ENCODE measurements at regions of chr11 and their contacts with region 1.

Region 1: DNA sequence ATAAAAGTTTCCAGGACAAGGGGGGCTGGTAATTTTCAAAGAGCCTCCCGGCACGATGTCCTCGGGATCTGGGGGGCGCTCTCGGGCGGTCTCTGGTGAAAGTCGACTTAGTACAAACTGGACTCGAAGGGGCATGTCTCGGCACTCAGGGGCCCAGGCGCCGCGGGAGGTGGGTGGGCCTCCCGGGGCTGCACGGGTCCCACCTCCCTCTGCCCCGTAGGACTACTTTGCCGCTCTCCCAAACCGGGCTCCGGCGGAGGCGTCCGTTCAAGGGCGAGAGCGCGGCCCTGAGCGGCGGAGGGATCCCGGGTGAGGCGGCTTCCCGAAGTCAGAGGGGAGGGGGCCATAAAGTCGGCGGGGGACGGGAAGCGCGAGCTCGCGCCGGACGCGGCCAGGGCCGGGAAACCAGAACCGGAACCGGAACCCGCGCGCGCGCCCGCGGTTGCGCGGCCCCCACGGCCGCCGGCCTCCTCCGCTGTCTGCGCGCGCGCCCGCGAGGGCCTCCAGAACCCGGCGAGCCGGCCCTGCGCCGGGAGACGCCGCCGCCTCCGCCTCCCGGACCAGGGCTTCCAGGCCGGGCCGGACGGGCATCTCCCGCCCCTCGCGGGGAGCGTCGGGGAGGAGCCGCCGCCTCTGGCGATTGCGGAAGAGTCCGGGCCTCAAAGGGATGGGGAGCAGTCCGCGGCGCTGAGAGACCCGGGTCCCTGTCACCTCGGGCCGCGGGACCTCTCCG is at the start of gene ARHGEF12:
- DNase-seq: peak; percentile 95
- H3K4me3 Mint-ChIP-seq: peak within 1 kb of the TSS; percentile 94
- H3K27ac Mint-ChIP-seq: peak within 1 kb of the TSS; percentile 88
- H3K4me1 Mint-ChIP-seq: peaks cover 52% of the 10 kb centered on the region
- H3K27me3 Mint-ChIP-seq: no peaks in the 10 kb centered on the region
- CTCF ChIP-seq: no peak
- total RNA-seq, gene ARHGEF12: 61.2 and 62.8 TPM in 2 replicates

Region 2: GRCh38 chr11:120324932-120325810 is 10.9 kb before region 1 on chr11 and contains the start of gene TLCD5:
- CTCF ChIA-PET with region 1: interaction called, 3 read pairs
- POLR2A ChIA-PET with region 1: interaction called, 14 read pairs
- intact Hi-C with region 1: no loop called
- DNase-seq: peak; percentile 55
- H3K4me3 Mint-ChIP-seq: peak within 1 kb of the TSS; percentile 73
- H3K27ac Mint-ChIP-seq: peak within 1 kb of the TSS; percentile 60
- H3K4me1 Mint-ChIP-seq: peaks cover 13% of the 10 kb centered on the region
- H3K27me3 Mint-ChIP-seq: no peaks in the 10 kb centered on the region
- CTCF ChIP-seq: no peak
- total RNA-seq, gene TLCD5: 9.6 and 13.0 TPM in 2 replicates

Region 3: DNA sequence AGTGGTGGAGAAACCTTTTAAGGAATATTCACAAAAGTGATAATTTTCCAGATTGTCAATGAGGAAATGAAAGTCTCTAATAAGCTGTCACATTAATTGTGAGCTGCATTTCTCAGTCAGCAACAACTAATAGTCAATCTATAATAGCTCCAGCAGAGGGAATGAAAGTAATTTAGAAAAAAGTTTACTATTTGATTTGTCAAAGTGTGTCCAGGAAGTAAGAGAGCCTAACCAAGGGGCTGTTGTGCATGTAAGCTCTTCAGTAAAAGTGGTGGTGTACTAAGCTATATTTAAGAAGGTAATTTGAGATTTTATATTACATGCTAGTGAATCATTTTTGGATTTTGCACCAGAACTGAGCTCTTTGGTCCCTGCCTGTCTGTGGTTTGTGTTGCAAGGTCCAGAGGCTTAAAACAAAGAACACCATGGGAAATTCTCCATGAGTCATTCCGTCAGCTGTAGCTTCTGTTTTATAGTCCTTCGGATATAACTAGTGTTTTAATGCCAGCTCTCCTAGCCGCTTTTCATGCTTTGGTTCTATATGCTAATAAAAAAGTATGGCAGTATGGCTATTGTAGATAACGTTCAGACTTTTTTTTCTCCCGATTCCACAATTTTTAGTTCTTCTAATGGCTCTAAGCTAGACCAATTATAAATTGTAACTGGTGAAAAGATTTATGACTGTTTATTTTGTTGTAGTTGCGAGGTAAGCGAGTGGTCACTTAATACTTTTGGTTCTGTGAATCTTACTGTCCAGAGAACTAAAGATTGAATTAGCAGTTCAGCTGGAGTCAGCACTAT is 64.7 kb after region 1 on chr11:
- CTCF ChIA-PET with region 1: interaction called, 23 read pairs
- POLR2A ChIA-PET with region 1: interaction called, 128 read pairs
- intact Hi-C with region 1: loop called (anchors 1 kb)
- DNase-seq: peak; percentile 98
- H3K4me3 Mint-ChIP-seq: peak overlapping the region; percentile 72
- H3K27ac Mint-ChIP-seq: peak overlapping the region; percentile 80
- H3K4me1 Mint-ChIP-seq: peaks cover 33% of the 10 kb centered on the region
- H3K27me3 Mint-ChIP-seq: no peaks in the 10 kb centered on the region
- CTCF ChIP-seq: no peak

Region 4: GRCh38 chr11:120424185-120424969 is 88.3 kb after region 1 on chr11:
- CTCF ChIA-PET with region 1: interaction called, 9 read pairs
- POLR2A ChIA-PET with region 1: interaction called, 93 read pairs
- intact Hi-C with region 1: no loop called
- DNase-seq: peak; percentile 35
- H3K4me3 Mint-ChIP-seq: peak overlapping the region; percentile 38
- H3K27ac Mint-ChIP-seq: no peak overlapping the region
- H3K4me1 Mint-ChIP-seq: peaks cover 8% of the 10 kb centered on the region
- H3K27me3 Mint-ChIP-seq: no peaks in the 10 kb centered on the region
- CTCF ChIP-seq: no peak

Region 5: DNA sequence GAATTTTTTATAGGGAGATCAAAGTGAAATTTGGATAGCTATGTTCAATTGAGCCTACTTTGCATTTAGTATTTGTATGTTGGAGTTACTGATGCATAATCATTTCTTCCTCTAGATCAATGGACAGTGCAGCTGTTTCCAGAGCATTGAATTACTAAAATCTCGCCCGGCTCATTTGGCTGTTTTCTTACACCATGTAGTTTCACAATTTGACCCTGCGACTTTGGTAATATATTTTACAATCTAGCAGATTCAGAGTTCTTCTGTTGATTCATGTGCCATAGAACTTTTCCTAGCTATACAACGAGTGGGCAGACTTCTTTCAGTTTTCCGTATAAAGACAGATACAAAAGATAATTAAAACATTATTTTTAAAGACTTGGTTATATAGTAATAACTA is 105.5 kb after region 1 on chr11:
- CTCF ChIA-PET with region 1: interaction called, 10 read pairs
- POLR2A ChIA-PET with region 1: interaction called, 14 read pairs
- intact Hi-C with region 1: no loop called
- DNase-seq: no peak
- H3K4me3 Mint-ChIP-seq: no peak overlapping the region
- H3K27ac Mint-ChIP-seq: no peak overlapping the region
- H3K4me1 Mint-ChIP-seq: no peaks in the 10 kb centered on the region
- H3K27me3 Mint-ChIP-seq: no peaks in the 10 kb centered on the region
- CTCF ChIP-seq: no peak

Region 6: GRCh38 chr11:120511116-120511819 is 175.2 kb after region 1 on chr11 and contains the start of gene GRIK4:
- CTCF ChIA-PET with region 1: interaction called, 11 read pairs
- POLR2A ChIA-PET with region 1: no interaction called
- intact Hi-C with region 1: no loop called
- DNase-seq: peak; percentile 79
- H3K4me3 Mint-ChIP-seq: peak within 1 kb of the TSS; percentile 29
- H3K27ac Mint-ChIP-seq: no peak within 1 kb of the TSS
- H3K4me1 Mint-ChIP-seq: peaks cover 6% of the 10 kb centered on the region
- H3K27me3 Mint-ChIP-seq: peaks cover 60% of the 10 kb centered on the region
- CTCF ChIP-seq: peak; percentile 92
- total RNA-seq, gene GRIK4: not detected in 2 replicates

Region 7: DNA sequence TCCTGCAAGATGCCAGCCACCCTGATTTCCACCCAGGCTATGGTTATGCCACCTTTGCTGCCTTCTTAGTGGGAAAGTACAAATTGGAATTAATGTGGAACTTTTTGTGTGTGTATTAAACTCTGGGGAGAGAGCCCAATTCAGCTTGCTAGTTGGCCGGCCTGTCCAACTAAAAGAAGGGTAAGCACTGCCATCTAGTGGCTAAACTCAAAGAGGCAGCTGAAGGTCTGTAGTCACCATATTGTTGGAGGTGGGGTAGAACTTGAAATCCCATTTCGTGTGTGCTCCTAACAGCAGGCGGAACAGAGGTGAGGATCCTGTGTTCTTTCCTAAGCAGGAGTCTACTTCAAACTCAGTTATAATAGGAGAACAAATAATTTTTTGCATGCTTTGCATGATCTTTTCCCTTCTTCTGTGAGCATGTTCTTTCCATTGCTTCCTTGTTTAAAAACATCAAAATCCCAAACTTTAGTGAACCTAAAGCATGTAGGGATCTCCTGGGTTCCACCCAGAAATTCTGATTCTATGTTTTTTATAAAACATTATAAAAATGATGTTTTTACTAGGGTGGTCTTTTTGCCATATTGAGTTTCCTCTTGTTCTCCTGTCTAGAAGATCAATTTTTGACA is 1255.4 kb after region 1 on chr11:
- CTCF ChIA-PET with region 1: no interaction called
- POLR2A ChIA-PET with region 1: no interaction called
- intact Hi-C with region 1: loop called (anchors 5 kb)
- DNase-seq: peak; percentile 80
- H3K4me3 Mint-ChIP-seq: no peak overlapping the region
- H3K27ac Mint-ChIP-seq: no peak overlapping the region
- H3K4me1 Mint-ChIP-seq: peaks cover 24% of the 10 kb centered on the region
- H3K27me3 Mint-ChIP-seq: no peaks in the 10 kb centered on the region
- CTCF ChIP-seq: peak; percentile 86

Measured in MCF 10A (cell line).